IMR-90 (cell line): ENCODE measurements at regions of chr11 and their contacts with region 1.

Region 1: DNA sequence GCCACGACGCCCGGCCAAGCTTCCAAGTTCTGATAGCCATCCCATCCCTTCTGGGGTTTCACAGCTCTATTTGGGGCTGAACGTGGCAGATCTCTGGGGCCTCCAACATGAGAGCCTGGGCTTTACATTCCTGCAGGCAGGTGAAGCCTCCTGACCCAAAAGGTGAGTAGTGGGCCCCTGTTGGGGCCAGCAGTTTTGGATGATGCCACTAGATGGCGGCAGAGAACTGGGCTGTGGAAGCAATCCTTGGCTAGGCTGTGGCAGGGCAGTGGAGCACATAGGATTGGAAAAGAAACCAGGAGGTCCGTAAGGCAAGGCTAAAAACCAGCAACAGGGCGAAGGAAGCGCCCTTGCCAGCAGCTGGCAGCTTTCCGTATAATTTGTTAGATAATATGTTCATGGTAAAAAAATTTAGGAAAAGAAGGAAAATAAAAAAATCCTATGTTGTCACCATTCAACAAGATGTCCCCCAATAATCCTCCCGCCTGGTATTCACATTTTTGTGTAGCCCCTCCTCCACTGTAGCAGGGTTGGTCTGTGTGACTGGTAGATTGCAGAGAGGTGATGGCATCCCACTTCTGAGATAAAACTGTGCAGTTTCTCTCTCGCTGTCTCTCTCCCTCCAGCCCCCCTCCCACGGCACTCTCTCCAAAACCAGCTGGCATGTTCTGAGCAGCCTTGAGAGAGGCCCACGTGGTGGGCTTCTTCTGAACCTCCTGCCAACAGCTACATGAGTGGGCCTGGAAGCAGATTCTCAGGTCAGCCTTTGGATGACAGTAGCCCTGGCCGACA is 43.6 kb upstream of the OR4B1 start:
- DNase-seq: peak; percentile 69
- ATAC-seq: peak; percentile 80
- H3K4me3 ChIP-seq: no peak overlapping the region
- H3K27ac ChIP-seq: no peak overlapping the region
- H3K4me1 ChIP-seq: peaks cover 12% of the 10 kb centered on the region
- H3K27me3 ChIP-seq: no peaks in the 10 kb centered on the region; the same call in 1 of the 2 replicates
- CTCF ChIP-seq: peak; percentile 90
- POLR2A ChIP-seq: no peak
- RAD21 ChIP-seq: peak; percentile 88

Region 2: GRCh38 chr11:48073031-48073861 is 99.8 kb before region 1 on chr11:
- CTCF ChIA-PET with region 1: no interaction called
- POLR2A ChIA-PET with region 1: no interaction called
- dilution Hi-C with region 1: no loop called
- in situ Hi-C with region 1: no loop called
- intact Hi-C with region 1: no loop called
- DNase-seq: no peak
- ATAC-seq: no peak
- H3K4me3 ChIP-seq: no peak overlapping the region
- H3K27ac ChIP-seq: no peak overlapping the region
- H3K4me1 ChIP-seq: peaks cover 4% of the 10 kb centered on the region
- H3K27me3 ChIP-seq: no peaks in the 10 kb centered on the region
- CTCF ChIP-seq: no peak
- POLR2A ChIP-seq: no peak
- RAD21 ChIP-seq: no peak

Region 3: GRCh38 chr11:49995565-49995964 is 1822.6 kb after region 1 on chr11:
- CTCF ChIA-PET with region 1: no interaction called
- POLR2A ChIA-PET with region 1: no interaction called
- dilution Hi-C with region 1: no loop called
- in situ Hi-C with region 1: no loop called
- intact Hi-C with region 1: loop called (anchors 5 kb)
- DNase-seq: peak; percentile 50
- ATAC-seq: no peak
- H3K4me3 ChIP-seq: no peak overlapping the region
- H3K27ac ChIP-seq: no peak overlapping the region
- H3K4me1 ChIP-seq: no peaks in the 10 kb centered on the region
- H3K27me3 ChIP-seq: no peaks in the 10 kb centered on the region
- CTCF ChIP-seq: peak; percentile 39
- POLR2A ChIP-seq: no peak
- RAD21 ChIP-seq: peak; percentile 48